ENCODE measurements at regions of chr20 and their contacts with region 1.

Region 1: DNA sequence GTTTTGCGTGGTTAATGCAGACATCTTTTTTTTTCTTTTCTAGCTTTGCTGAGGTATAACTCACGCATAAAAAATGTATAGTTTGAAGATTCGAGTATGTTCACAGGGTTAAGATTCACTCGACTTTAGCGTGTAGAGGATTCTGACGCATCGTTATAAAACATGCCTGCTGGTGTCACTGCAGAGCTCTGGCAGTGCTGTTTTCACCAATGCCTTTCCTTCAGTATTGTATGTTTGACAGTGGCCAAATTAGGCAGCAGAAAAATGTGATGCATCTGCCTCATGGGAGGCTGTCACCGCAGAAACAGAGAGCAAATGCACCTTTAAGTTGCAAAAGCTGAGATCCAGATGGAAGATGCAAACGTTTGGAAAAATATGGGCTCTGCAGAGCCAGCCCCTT is 18.0 kb upstream of the SIRPB2 start:
- H3K4me3 Mint-ChIP-seq: no peak overlapping the region
- H3K27ac Mint-ChIP-seq: no peak overlapping the region
- H3K4me1 Mint-ChIP-seq: peaks cover 6% of the 10 kb centered on the region
- H3K27me3 Mint-ChIP-seq: peaks cover 2% of the 10 kb centered on the region

Region 2: DNA sequence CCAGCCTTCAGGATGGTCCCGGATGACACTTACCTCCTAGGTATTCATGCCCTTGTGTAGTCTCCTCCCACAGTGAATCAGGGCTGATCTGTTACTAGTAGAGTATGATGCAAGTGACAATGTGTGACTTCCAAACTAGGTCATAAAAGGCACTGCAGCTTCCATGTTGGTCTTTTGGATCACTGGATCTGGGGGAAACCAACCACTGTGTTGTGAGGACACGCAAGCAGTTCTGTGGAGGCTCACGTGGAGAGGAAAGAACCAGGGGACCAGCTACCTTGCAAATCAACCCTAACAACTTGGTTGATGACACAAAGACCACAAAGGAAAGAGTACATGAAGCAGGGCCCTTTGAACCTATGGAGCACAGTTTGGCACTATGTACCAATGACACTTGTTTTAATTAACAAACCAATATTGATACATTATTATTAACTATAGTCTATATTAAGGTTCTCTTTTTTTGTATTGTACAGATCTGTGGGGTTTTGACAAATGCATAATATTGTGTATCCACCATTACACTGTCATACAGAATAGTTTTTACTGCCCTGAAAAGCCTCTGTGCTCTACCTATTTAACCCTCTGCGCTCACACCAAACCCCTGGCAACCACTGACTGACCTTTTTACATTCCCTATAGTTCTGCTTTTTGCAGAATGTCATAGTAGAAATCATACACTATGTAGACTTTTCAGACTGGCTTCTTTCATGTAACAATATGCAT is 164.0 kb before region 1 on chr20:
- intact Hi-C with region 1: no loop called
- H3K4me3 Mint-ChIP-seq: no peak overlapping the region
- H3K27ac Mint-ChIP-seq: no peak overlapping the region
- H3K4me1 Mint-ChIP-seq: peaks cover 6% of the 10 kb centered on the region
- H3K27me3 Mint-ChIP-seq: no peaks in the 10 kb centered on the region

Region 3: DNA sequence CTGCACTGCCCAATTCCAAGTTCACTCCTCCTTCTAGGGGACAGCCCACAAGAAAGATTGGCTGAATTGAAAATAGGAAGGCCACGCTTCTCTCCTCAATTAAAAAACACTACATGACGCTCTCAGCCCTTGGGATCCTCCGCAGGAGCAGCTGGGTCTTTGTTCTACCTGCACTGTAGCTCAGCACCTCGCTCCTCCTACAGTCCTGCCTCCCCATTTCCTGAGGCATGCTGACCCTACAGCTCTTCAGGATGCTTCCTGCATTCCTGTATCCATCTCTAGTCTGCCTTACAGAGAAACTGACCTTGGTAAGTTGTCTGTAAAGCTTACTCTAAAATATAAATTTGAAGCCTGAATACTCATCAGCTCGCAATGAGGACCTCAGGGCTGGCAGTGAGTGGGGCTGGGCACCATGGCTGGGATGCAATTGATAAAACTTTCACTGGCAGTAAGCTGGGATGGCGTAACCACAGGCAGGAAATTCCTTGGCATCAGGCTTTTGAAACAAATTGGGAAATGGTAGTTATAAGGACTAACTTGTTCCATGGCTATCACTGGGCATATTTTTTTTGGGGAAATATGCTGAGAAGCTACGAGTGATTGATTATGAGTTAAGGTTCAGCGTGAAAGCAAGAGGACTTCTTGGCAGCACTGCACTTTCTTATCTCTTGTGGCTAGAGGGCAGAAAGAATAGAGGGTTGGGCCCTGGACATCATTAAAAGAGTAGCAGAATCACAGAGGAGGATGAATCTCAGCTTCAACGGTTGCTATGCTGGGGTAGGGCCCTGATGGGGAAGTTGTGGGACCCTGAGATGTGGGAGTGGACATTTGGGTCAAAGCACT is 122.3 kb after region 1 on chr20:
- intact Hi-C with region 1: loop called (anchors 10 kb)
- H3K4me3 Mint-ChIP-seq: no peak overlapping the region
- H3K27ac Mint-ChIP-seq: no peak overlapping the region
- H3K4me1 Mint-ChIP-seq: peaks cover 51% of the 10 kb centered on the region
- H3K27me3 Mint-ChIP-seq: no peaks in the 10 kb centered on the region

Region 4: DNA sequence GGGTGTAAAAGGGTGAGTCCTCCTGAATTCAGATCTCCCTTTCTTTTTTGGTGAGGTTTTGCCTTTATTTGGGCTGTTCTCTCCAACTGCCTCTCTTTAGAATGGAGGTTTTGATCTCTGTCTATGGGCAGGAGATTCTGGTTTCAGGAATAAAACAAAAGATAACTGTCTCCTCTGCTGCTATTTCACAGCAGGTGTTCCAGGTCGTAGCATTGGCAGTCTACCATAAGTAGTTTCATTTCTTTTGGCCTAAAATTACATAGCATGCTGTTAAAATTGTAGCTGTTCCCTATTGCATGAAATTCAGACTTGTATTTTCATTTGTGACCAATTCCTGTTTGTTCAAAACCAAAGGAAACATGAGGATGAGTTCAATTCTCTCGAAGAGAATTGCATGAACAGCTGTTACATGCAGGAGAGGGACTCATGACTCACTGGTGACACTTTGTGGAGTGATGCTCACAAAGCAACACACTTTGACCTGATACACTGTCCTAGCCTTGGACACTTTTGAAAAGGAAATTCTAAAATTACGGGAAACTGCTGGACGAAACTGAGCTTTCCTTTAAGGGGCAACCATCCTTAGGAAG is 225.1 kb after region 1 on chr20:
- intact Hi-C with region 1: loop called (anchors 5 kb)
- H3K4me3 Mint-ChIP-seq: no peak overlapping the region
- H3K27ac Mint-ChIP-seq: peak overlapping the region; percentile 24
- H3K4me1 Mint-ChIP-seq: peaks cover 15% of the 10 kb centered on the region
- H3K27me3 Mint-ChIP-seq: peaks cover 2% of the 10 kb centered on the region

Region 5: DNA sequence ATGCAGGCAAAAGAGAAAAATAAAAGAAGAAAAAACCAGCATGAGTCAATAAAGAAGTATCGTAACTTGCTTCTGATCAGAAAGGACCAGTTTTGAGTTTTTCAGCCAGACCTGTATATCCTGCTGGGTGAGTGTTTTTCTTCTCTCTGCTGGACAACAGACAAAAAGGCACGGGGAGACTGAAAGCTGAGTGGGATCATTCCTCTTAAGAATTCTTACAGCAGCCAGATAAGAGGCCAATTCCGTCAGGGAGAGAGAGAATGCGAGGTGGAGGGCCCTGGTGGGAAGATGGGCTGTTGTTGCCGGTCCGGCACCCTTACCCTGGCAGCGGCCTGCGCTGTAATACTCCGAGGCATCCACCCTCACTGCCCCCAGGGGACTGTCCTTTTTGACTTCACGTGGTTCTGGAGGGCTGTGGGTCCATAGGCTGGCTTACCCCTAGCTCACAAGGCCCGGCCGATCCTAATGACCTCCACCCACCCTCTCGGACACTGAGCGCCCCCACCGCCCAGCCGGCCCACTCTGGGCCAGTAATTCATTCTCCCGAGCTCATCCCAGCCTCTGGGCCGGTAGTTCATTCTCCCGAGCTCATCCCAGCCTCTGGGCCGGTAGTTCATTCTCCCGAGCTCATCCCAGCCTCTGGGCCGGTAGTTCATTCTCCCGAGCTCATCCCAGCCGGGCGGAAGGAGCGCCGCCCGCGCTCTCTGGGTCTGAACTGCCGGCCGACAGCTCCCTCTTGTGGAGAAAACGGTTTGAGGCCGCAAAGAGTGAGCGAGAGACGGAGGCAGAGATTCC is 267.6 kb after region 1 on chr20:
- intact Hi-C with region 1: loop called (anchors 5 kb)
- H3K4me3 Mint-ChIP-seq: peak overlapping the region; percentile 77
- H3K27ac Mint-ChIP-seq: peak overlapping the region; percentile 43
- H3K4me1 Mint-ChIP-seq: peaks cover 29% of the 10 kb centered on the region
- H3K27me3 Mint-ChIP-seq: peaks cover 44% of the 10 kb centered on the region